ENCODE measurements at regions of chr11 and their contacts with region 1.

Region 1: GRCh38 chr11:109697140-109697843 is 275.3 kb downstream of the C11orf87 start:
- DNase-seq: peak; percentile 64
- H3K4me3 ChIP-seq: no peak overlapping the region
- H3K27ac ChIP-seq: peak overlapping the region; percentile 97
- H3K4me1 ChIP-seq: peaks cover 15% of the 10 kb centered on the region
- H3K27me3 ChIP-seq: no peaks in the 10 kb centered on the region
- CTCF ChIP-seq: peak; percentile 75 to 85

Region 2: GRCh38 chr11:108788565-108789199 is 908.6 kb before region 1 on chr11:
- CTCF ChIA-PET with region 1: no interaction called
- dilution Hi-C with region 1: no loop called
- in situ Hi-C with region 1: no loop called
- intact Hi-C with region 1: loop called (anchors 1 kb)
- DNase-seq: peak; percentile 12
- H3K4me3 ChIP-seq: no peak overlapping the region
- H3K27ac ChIP-seq: no peak overlapping the region
- H3K4me1 ChIP-seq: no peaks in the 10 kb centered on the region
- H3K27me3 ChIP-seq: no peaks in the 10 kb centered on the region
- CTCF ChIP-seq: peak; percentile 35 to 65

Region 3: DNA sequence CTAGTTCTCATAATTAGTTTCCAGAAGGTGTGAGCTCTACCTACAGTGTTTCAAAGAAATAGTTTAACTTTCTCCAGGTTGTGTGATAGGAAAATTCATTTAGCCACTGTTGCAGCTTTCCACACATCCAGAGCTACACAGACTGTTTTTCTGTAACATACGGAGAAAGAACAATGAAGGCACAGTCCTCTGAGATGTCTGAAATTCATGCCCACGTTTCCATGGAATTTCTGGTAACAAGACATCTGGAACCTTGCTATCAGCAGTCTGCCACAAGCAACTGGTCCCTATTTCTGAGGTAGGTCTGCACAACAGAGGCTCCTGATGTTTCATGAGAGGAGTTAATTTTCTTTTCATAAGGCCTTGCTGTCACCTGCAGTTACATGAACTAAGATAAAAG is 548.6 kb before region 1 on chr11:
- CTCF ChIA-PET with region 1: no interaction called
- dilution Hi-C with region 1: no loop called
- in situ Hi-C with region 1: no loop called
- intact Hi-C with region 1: loop called (anchors 10 kb)
- DNase-seq: no peak
- H3K4me3 ChIP-seq: no peak overlapping the region
- H3K27ac ChIP-seq: no peak overlapping the region
- H3K4me1 ChIP-seq: no peaks in the 10 kb centered on the region
- H3K27me3 ChIP-seq: no peaks in the 10 kb centered on the region
- CTCF ChIP-seq: no peak

Region 4: GRCh38 chr11:109320595-109320994 is 376.7 kb before region 1 on chr11:
- CTCF ChIA-PET with region 1: no interaction called
- dilution Hi-C with region 1: no loop called
- in situ Hi-C with region 1: no loop called
- intact Hi-C with region 1: loop called (anchors 10 kb)
- DNase-seq: peak; percentile 79
- H3K4me3 ChIP-seq: no peak overlapping the region
- H3K27ac ChIP-seq: no peak overlapping the region
- H3K4me1 ChIP-seq: peaks cover 2% of the 10 kb centered on the region
- H3K27me3 ChIP-seq: no peaks in the 10 kb centered on the region
- CTCF ChIP-seq: no peak

Region 5: GRCh38 chr11:109564241-109564640 is 133.1 kb before region 1 on chr11:
- CTCF ChIA-PET with region 1: no interaction called
- dilution Hi-C with region 1: no loop called
- in situ Hi-C with region 1: no loop called
- intact Hi-C with region 1: no loop called
- DNase-seq: no peak
- H3K4me3 ChIP-seq: no peak overlapping the region
- H3K27ac ChIP-seq: no peak overlapping the region
- H3K4me1 ChIP-seq: no peaks in the 10 kb centered on the region
- H3K27me3 ChIP-seq: no peaks in the 10 kb centered on the region
- CTCF ChIP-seq: no peak

Region 6: GRCh38 chr11:109619498-109619897 is 77.8 kb before region 1 on chr11:
- CTCF ChIA-PET with region 1: no interaction called
- dilution Hi-C with region 1: no loop called
- in situ Hi-C with region 1: no loop called
- intact Hi-C with region 1: loop called (anchors 2 kb)
- DNase-seq: peak; percentile 94
- H3K4me3 ChIP-seq: no peak overlapping the region
- H3K27ac ChIP-seq: peak overlapping the region; percentile 52
- H3K4me1 ChIP-seq: peaks cover 22% of the 10 kb centered on the region
- H3K27me3 ChIP-seq: no peaks in the 10 kb centered on the region
- CTCF ChIP-seq: no peak

Region 7: GRCh38 chr11:109752212-109752825 is 55.0 kb after region 1 on chr11:
- CTCF ChIA-PET with region 1: no interaction called
- dilution Hi-C with region 1: no loop called
- in situ Hi-C with region 1: no loop called
- intact Hi-C with region 1: no loop called
- DNase-seq: no peak
- H3K4me3 ChIP-seq: no peak overlapping the region
- H3K27ac ChIP-seq: no peak overlapping the region
- H3K4me1 ChIP-seq: no peaks in the 10 kb centered on the region
- H3K27me3 ChIP-seq: no peaks in the 10 kb centered on the region
- CTCF ChIP-seq: no peak

Region 8: DNA sequence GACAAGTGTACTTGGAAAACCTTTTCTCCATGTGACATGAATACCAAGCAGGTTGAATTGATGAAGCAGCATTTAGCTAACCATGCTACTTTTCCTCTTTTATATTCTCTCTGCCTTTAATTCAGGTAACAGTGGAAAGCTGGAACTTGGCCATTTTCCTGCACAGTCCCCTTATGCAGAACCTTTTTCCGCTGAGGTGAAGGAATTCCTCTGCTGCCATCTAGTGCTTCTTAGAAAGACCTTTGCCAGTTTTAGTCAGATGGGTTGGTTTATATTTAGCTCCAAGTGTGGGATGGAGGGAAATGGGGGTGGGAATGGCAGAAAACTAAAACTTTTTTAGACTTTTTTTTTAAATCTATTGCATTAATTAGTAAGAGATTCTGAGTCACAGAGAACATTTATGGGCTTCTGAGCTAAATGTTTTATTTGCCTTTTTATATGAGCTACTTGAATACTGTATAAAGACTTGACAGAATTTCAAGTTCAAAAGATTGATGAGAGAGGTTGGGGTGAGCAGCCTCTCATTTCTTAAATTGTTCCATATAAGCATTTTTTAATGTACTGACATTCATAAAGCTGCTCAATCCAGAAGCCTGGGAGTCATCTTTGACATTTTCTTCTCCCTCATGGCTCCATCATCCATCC is 242.0 kb after region 1 on chr11:
- CTCF ChIA-PET with region 1: no interaction called
- dilution Hi-C with region 1: no loop called
- in situ Hi-C with region 1: no loop called
- intact Hi-C with region 1: loop called (anchors 10 kb)
- DNase-seq: peak; percentile 68
- H3K4me3 ChIP-seq: no peak overlapping the region
- H3K27ac ChIP-seq: no peak overlapping the region
- H3K4me1 ChIP-seq: peaks cover 3% of the 10 kb centered on the region
- H3K27me3 ChIP-seq: no peaks in the 10 kb centered on the region
- CTCF ChIP-seq: peak; percentile 64 to 79

Measured in mammary epithelial cell (primary cell).